ENCODE measurements at regions of chr14 and their contacts with region 1.

Region 1: GRCh38 chr14:49867831-49868723 is 15.5 kb upstream of the NEMF start:
- DNase-seq: peak; percentile 98 to 99
- ATAC-seq: peak; percentile 97
- H3K4me3 ChIP-seq: peak overlapping the region; percentile 43 to 50
- H3K27ac ChIP-seq: peak overlapping the region; percentile 53 to 85
- H3K4me1 ChIP-seq: no peaks in the 10 kb centered on the region
- H3K27me3 ChIP-seq: no peaks in the 10 kb centered on the region

Region 2: GRCh38 chr14:49796025-49796424 is 72.1 kb before region 1 on chr14:
- intact Hi-C with region 1: no loop called
- DNase-seq: no peak
- ATAC-seq: no peak
- H3K4me3 ChIP-seq: no peak overlapping the region
- H3K27ac ChIP-seq: no peak overlapping the region
- H3K4me1 ChIP-seq: no peaks in the 10 kb centered on the region
- H3K27me3 ChIP-seq: no peaks in the 10 kb centered on the region

Region 3: GRCh38 chr14:50003213-50004031 is 135.3 kb after region 1 on chr14:
- intact Hi-C with region 1: loop called in 1 of 2 experiments (anchors 2 kb)
- DNase-seq: peak; percentile 89 to 92
- ATAC-seq: peak; percentile 74
- H3K4me3 ChIP-seq: peak overlapping the region; percentile 3 to 25
- H3K27ac ChIP-seq: peak overlapping the region; percentile 78 to 99
- H3K4me1 ChIP-seq: peaks cover 2 to 7% of the 10 kb centered on the region in 2 donors
- H3K27me3 ChIP-seq: no peaks in the 10 kb centered on the region

Region 4: DNA sequence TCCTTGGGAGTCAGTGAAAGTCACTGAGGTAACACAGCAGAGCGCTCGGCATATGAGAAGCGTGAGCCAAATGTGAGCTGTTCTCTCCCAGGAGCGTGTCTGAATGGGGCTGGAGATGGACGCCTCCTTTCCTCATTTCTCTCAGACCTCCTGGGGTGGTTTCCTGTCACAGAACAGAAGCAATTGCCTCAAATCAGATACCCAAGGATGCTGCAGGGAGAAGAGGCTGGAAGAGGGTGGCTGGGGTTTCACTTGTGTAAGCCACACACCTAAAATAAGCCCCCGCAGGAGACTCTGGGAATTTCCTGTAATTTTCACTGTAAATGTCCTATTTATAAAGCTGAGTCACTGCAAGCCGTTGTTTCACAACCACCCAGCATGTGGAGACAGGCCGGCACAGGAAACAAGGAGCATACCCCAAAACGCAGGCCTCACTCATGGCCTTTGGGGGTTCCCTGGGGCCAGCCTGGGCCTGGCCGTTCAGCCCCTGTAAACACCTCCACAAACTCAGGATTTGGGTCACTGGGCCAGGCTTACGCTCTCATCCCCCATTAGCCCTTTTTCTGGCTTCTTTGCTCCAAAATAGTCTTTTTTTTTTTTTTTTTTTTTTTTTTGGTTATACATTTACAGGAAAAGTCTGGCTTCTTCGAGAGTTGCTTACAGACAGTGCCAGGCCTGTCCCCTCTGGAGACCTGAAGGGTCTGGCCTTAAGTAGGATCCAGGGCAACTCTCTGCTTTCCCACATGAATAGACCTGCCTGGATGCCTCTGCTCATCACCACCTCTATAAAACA is 193.0 kb after region 1 on chr14:
- intact Hi-C with region 1: loop called in 1 of 2 experiments (anchors 5 kb)
- DNase-seq: peak; percentile 75 to 79
- ATAC-seq: peak; percentile 88
- H3K4me3 ChIP-seq: no peak overlapping the region
- H3K27ac ChIP-seq: peak overlapping the region; percentile 79 to 94
- H3K4me1 ChIP-seq: peaks cover 7% of the 10 kb centered on the region in 2 donors
- H3K27me3 ChIP-seq: no peaks in the 10 kb centered on the region

Region 5: GRCh38 chr14:50109342-50109741 is 241.3 kb after region 1 on chr14:
- intact Hi-C with region 1: loop called (anchors 5 kb)
- DNase-seq: no peak
- ATAC-seq: no peak
- H3K4me3 ChIP-seq: no peak overlapping the region
- H3K27ac ChIP-seq: no peak overlapping the region
- H3K4me1 ChIP-seq: no peaks in the 10 kb centered on the region
- H3K27me3 ChIP-seq: no peaks in the 10 kb centered on the region

Region 6: GRCh38 chr14:50532502-50533240 is 664.6 kb after region 1 on chr14 and contains the start of gene MAP4K5:
- intact Hi-C with region 1: loop called in 1 of 2 experiments (anchors 10 kb)
- DNase-seq: peak; percentile 95 to 97
- ATAC-seq: peak; percentile 99
- H3K4me3 ChIP-seq: peak within 1 kb of the TSS; percentile 65 to 90
- H3K27ac ChIP-seq: peak within 1 kb of the TSS; percentile 10 to 71
- H3K4me1 ChIP-seq: peaks cover 0 to 4% of the 10 kb centered on the region in 2 donors
- H3K27me3 ChIP-seq: no peaks in the 10 kb centered on the region
- total RNA-seq, gene MAP4K5: 53.9 to 67.0 TPM

Measured in aorta (tissue), 5 donors.